ENCODE measurements at regions of chr2 and their contacts with region 1.

Region 1: GRCh38 chr2:27703638-27704341 is 40.1 kb downstream of the SLC4A1AP start:
- DNase-seq: peak; percentile 87
- H3K4me3 Mint-ChIP-seq: no peak overlapping the region
- H3K27ac Mint-ChIP-seq: no peak overlapping the region
- H3K4me1 Mint-ChIP-seq: peaks cover 47% of the 10 kb centered on the region
- H3K27me3 Mint-ChIP-seq: no peaks in the 10 kb centered on the region
- CTCF ChIP-seq: peak; percentile 76

Region 2: DNA sequence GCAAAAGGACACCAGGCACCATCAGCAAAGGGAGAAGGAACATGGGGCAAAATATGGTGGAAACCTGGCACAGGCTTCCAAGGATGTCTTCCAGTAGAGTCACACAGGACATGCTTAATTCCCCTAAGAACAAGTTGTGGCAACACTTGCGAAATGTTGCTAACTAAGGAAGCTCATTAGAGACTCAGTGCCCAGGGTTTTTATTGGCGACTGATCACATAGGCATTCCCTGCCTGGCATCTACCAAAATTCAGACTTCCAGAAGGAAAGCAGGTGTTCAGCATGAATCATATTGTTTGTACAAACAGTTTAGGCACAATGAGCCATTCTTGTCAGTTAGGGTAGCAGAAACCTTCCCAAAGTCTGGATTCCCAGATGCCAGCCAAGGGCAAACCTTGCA is 14.4 kb before region 1 on chr2:
- CTCF ChIA-PET with region 1: interaction called, 23 read pairs
- POLR2A ChIA-PET with region 1: interaction called, 18 read pairs
- intact Hi-C with region 1: no loop called
- DNase-seq: peak; percentile 70
- H3K4me3 Mint-ChIP-seq: no peak overlapping the region
- H3K27ac Mint-ChIP-seq: no peak overlapping the region
- H3K4me1 Mint-ChIP-seq: peaks cover 19% of the 10 kb centered on the region
- H3K27me3 Mint-ChIP-seq: no peaks in the 10 kb centered on the region
- CTCF ChIP-seq: no peak

Region 3: GRCh38 chr2:27754138-27754588 is 50.4 kb after region 1 on chr2:
- CTCF ChIA-PET with region 1: interaction called, 32 read pairs
- POLR2A ChIA-PET with region 1: interaction called, 5 read pairs
- intact Hi-C with region 1: loop called (anchors 1 kb)
- DNase-seq: peak; percentile 82
- H3K4me3 Mint-ChIP-seq: peak overlapping the region; percentile 31
- H3K27ac Mint-ChIP-seq: no peak overlapping the region
- H3K4me1 Mint-ChIP-seq: peaks cover 42% of the 10 kb centered on the region
- H3K27me3 Mint-ChIP-seq: no peaks in the 10 kb centered on the region
- CTCF ChIP-seq: peak; percentile 95

Region 4: DNA sequence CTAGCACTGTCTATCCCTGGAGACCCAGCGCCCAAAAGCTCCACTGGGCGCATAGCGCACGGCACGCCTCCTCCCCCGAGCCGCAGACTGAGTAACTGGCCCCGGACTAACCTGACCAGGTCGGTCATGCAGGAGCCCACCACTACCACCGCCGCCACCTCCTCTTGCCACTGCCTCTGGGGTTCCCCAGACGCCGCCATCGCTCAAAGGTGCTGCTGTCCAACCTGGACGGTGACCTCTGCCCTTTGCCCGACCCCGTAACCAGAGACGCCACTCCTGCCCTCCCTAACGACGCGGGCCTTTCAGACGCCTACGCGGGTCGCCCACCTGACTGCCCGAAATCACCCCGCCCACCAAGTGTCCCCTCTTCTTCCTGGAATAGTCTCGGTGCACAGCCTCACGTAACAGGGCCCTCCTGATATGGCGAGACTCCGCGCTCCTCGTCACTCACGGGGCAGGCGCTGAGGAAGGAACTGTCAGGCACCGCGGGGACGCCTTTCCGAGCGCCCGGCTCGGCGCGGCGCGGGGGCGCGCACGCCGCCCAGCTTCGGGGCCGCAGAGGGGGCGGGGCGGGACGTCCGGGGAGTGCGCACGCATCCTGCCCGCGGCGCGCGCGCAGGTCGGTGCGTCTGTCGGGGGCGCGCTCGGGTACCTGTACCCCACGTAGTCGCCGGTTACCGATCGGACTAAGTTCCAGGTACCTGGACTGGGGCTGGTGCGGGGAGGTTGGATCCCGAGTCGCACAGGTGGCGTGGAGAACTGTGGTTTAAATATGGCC is 186.5 kb after region 1 on chr2 and contains the starts of genes BABAM2 and RBKS:
- CTCF ChIA-PET with region 1: interaction called, 3 read pairs
- POLR2A ChIA-PET with region 1: interaction called, 9 read pairs
- intact Hi-C with region 1: loop called (anchors 5 kb)
- DNase-seq: peak; percentile 83
- H3K4me3 Mint-ChIP-seq: peak within 1 kb of the TSS; percentile 99
- H3K27ac Mint-ChIP-seq: peak within 1 kb of the TSS; percentile 100
- H3K4me1 Mint-ChIP-seq: peaks cover 36% of the 10 kb centered on the region
- H3K27me3 Mint-ChIP-seq: no peaks in the 10 kb centered on the region
- CTCF ChIP-seq: no peak
- total RNA-seq, gene BABAM2: 45.1 and 57.6 TPM in 2 replicates
- total RNA-seq, gene RBKS: 9.2 and 9.9 TPM in 2 replicates

Region 5: DNA sequence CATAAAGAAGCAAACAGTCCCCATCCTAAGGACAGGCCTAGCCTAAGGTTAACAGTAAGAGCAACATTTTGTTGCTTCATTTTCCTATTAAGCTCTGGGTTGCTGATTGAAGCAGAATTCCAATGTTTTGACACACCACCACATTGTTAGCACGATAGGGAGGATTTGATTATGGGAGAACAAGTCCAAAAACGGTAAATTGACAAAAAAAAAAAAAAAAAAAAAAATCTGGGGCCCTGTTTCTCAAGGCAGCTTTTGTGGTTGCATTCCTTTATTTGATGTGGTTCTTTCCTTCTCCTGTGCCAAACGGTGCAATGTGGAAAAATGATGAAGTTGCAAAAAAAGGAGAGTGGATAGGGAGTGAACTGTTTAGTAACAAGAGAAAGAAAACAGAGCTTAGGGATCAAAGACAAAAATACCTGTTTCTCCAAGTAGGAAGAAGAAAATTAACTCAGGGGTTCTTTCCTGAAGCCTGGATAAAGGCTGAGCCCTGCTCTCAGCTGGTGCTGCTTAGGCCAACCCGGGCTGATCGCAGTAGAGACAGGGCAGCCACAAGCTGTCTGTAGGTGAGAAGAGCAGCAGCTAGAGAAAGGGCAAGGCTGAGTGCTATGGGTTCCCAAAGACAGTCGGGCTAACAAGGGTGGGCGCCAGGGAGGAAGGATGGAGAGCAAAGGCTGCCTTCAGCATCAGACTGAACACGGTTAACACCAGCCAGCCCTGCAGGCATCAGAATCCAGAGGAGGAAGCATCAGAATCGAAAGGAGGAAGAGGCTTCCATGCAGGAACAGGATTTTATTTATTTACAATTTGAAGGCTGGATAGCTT is 521.1 kb after region 1 on chr2:
- CTCF ChIA-PET with region 1: interaction called, 4 read pairs
- POLR2A ChIA-PET with region 1: interaction called, 13 read pairs
- intact Hi-C with region 1: no loop called
- DNase-seq: peak; percentile 66
- H3K4me3 Mint-ChIP-seq: peak overlapping the region; percentile 41
- H3K27ac Mint-ChIP-seq: peak overlapping the region; percentile 93
- H3K4me1 Mint-ChIP-seq: peaks cover 39% of the 10 kb centered on the region
- H3K27me3 Mint-ChIP-seq: no peaks in the 10 kb centered on the region
- CTCF ChIP-seq: no peak

Region 6: DNA sequence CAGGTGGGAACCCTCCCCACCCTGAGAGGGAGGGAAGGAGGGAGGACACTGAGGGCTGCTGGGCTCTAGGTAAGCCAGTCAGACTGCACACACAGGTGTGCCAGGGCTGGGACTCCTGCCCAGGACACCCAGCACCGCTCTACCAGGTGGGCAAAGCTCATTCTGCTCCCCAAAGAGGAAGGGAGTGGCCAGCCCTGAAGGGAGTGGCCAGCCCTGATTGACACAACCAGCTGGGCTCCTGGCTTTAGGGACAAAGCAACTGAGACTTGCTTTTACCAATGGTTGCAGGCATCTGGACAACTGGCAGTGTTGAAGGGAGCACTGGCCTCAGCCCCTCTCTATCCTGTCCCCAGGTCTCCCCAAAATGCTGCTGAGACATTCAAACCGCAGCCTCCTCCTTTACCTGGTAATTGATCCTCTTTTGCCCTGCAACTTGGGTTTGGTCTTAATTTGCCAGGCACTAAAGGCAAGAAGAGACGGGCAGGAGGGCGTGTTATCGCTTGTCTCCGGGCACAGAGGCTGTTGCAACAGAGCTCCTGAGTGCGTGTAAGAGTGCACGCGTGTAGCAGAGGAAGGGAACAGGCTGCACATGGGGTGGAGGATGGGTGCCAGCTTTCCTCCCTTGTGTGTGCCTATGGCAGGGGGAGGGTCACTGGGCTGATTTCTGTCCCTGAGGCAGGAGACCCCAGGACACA is 674.3 kb after region 1 on chr2:
- CTCF ChIA-PET with region 1: interaction called, 4 read pairs
- POLR2A ChIA-PET with region 1: interaction called, 21 read pairs
- intact Hi-C with region 1: no loop called
- DNase-seq: peak; percentile 93
- H3K4me3 Mint-ChIP-seq: peak overlapping the region; percentile 61
- H3K27ac Mint-ChIP-seq: peak overlapping the region; percentile 70
- H3K4me1 Mint-ChIP-seq: peaks cover 29% of the 10 kb centered on the region
- H3K27me3 Mint-ChIP-seq: no peaks in the 10 kb centered on the region
- CTCF ChIP-seq: no peak

Measured in MCF 10A (cell line).